GM10248 (cell line): ENCODE measurements at regions of chr7 and their contacts with region 1.

Region 1: GRCh38 chr7:12458520-12459131 is 55.0 kb upstream of the VWDE start:
- DNase-seq: peak; percentile 35
- CTCF ChIP-seq: peak; percentile 58

Region 2: GRCh38 chr7:12398186-12398585 is 60.4 kb before region 1 on chr7:
- CTCF ChIA-PET with region 1: no interaction called
- POLR2A ChIA-PET with region 1: no interaction called
- DNase-seq: no peak
- CTCF ChIP-seq: no peak

Region 3: DNA sequence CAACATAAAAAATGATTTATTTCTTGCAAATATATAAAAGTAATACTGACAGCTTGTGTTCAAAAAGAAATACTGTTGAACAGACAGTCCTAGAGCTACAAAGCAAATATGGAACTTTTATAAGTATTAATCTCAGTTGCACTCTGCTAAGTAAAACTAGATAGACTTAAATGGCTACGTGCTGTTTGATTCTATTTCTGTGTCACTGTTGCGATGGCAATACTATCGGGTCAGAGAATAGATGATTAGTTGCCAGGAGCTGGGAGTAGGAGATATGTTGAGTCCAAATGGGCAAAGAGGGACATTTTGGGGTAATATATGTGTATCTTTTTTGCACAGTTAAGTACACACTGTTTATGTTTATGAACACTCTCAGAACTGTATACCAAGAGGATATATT is 13.8 kb before region 1 on chr7:
- CTCF ChIA-PET with region 1: interaction called, 18 read pairs
- POLR2A ChIA-PET with region 1: no interaction called
- DNase-seq: no peak
- CTCF ChIP-seq: no peak

Region 4: DNA sequence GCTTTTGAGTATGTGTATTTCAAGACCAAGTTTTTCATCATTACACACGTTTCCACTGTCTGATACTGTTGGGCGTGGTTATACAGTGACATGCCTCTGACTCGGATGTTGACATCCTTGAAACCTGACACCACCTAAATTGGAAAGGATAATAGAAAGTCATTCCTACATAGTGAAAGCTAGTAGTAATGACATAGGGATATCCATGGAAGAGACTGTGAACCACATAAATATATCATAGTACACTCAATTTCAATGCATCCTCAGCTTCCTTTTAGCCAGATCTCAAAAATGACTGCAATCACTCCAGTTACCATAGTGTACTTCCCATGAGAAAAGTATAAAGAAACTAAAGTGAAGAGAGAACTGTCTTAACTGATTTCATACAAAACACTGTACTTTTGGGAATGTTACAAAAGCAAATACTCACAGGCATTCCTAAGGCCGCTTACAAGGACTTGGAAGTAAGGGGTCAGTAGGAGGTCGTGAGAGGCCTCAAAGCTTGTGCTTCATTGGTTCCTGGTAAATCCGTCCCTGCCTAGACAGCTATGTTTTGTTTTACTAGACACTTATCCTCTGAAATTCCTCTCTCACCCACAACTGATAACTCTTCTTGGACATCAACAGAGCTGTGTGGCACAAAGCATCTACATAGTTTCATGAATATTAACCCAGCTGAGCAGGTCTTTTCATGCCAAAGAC is 16.9 kb after region 1 on chr7:
- CTCF ChIA-PET with region 1: interaction called, 31 read pairs
- POLR2A ChIA-PET with region 1: no interaction called
- DNase-seq: no peak
- CTCF ChIP-seq: no peak

Region 5: DNA sequence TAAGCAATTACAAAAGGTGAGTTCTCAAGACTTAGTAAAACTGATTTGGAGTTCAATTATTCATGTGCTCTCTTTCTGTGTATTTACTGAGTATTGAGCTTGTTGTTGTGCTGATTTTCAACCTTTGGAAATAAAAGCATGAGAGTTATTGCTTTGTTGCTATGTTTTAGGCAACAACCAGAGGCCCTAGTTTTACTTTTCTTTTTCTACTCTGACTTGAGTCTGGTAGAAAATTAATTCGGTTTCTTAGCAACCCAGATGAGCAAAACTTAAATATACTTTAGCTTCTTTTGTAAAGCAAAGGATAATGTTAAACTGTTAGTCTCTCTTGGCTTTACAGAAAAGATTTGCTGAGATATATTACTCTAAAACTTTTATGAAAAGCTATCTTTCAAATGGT is 45.5 kb after region 1 on chr7:
- CTCF ChIA-PET with region 1: interaction called, 16 read pairs
- POLR2A ChIA-PET with region 1: no interaction called
- DNase-seq: no peak
- CTCF ChIP-seq: no peak